ENCODE measurements at regions of chr3 and their contacts with region 1.

Region 1: DNA sequence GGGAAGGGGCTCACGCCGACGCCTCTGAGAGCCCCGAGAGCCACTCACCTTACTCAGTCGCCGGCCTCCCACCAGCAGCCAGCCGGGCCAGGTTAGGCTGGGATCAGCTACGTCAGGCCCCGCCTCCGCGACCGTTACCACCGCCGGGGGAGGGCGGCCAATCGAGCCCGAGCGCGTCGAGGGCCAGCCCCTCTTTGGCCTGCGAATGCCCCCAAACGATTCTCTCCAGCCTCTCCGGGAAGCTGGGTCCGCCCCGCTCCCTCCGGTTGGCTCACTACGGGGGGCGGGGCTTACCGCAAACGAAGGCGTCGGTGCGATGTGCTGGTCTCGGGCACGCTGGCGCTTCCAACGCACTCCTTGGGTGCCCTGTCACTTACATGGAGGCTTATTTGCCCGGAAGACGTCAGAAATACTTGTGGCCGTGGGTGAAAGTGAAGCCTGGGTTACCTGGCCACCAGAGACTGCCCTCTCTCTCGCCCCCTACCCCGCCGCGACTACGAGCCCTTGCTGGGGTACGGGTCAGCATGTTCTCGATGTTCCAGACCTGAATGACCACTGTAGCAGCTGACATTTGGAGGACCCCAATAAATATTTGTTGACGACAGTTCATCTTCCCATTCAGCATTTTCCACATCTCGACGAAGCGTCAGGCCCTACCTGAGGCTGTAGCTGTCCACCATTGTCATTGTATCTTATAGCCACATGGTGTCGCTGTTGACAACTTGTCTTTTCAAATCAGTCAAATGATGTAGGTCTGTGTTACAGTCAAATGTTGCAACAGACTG is at the start of gene CEP70:
- DNase-seq: peak; percentile 96
- H3K4me3 ChIP-seq: peak within 1 kb of the TSS; percentile 65
- H3K27ac ChIP-seq: peak within 1 kb of the TSS; percentile 78
- H3K4me1 ChIP-seq: peaks cover 3% of the 10 kb centered on the region
- H3K27me3 ChIP-seq: no peaks in the 10 kb centered on the region
- CTCF ChIP-seq: peak; percentile 90
- total RNA-seq, gene CEP70: 25.6 and 30.8 TPM in 2 replicates

Region 2: DNA sequence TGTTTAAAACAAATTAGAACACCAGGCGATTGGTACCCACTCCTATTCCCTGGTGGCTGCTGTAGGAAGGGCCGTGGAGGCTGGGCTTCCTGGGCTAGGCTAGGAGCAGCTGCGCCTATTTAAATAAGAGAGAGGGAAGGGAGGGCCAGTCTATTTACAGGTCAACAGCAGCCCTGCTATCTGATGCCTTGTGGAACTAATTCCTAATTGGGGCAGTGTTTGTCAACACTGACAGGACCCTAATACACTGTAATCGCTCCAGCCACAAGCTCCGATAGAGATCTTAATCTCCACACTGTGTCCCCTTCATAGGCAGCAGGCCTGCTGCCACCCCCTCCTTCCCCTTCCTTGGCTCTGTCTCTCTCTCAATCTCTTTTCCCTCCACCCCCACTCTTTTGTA is 947.2 kb before region 1 on chr3:
- CTCF ChIA-PET with region 1: no interaction called
- POLR2A ChIA-PET with region 1: no interaction called
- intact Hi-C with region 1: no loop called
- DNase-seq: no peak
- H3K4me3 ChIP-seq: no peak overlapping the region
- H3K27ac ChIP-seq: no peak overlapping the region
- H3K4me1 ChIP-seq: no peaks in the 10 kb centered on the region
- H3K27me3 ChIP-seq: peaks cover 27% of the 10 kb centered on the region
- CTCF ChIP-seq: no peak

Region 3: GRCh38 chr3:138068579-138069174 is 525.7 kb before region 1 on chr3:
- CTCF ChIA-PET with region 1: no interaction called
- POLR2A ChIA-PET with region 1: no interaction called
- intact Hi-C with region 1: loop called (anchors 5 kb)
- DNase-seq: peak; percentile 85
- H3K4me3 ChIP-seq: no peak overlapping the region
- H3K27ac ChIP-seq: no peak overlapping the region
- H3K4me1 ChIP-seq: no peaks in the 10 kb centered on the region
- H3K27me3 ChIP-seq: no peaks in the 10 kb centered on the region
- CTCF ChIP-seq: peak; percentile 99

Region 4: DNA sequence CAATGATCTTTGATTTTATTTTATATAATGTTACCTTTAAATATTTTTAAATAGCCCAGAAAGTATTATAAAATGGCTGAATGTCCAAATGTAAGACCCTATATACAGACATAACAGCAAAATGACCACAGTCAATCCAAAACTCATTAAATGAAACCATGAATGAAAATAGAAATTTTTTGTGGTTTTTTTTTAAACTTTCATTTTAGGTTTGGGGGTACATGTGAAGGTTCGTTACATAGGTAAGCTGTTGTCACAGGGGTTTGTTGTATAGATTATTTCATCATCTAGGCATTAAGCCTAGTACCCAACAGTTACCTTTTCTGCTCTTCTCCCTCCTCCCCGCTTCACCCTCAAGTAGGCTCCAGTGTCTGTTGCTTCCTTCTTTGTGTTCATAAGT is 123.0 kb after region 1 on chr3:
- CTCF ChIA-PET with region 1: no interaction called
- POLR2A ChIA-PET with region 1: no interaction called
- intact Hi-C with region 1: no loop called
- DNase-seq: no peak
- H3K4me3 ChIP-seq: no peak overlapping the region
- H3K27ac ChIP-seq: no peak overlapping the region
- H3K4me1 ChIP-seq: no peaks in the 10 kb centered on the region
- H3K27me3 ChIP-seq: no peaks in the 10 kb centered on the region
- CTCF ChIP-seq: no peak

Region 5: DNA sequence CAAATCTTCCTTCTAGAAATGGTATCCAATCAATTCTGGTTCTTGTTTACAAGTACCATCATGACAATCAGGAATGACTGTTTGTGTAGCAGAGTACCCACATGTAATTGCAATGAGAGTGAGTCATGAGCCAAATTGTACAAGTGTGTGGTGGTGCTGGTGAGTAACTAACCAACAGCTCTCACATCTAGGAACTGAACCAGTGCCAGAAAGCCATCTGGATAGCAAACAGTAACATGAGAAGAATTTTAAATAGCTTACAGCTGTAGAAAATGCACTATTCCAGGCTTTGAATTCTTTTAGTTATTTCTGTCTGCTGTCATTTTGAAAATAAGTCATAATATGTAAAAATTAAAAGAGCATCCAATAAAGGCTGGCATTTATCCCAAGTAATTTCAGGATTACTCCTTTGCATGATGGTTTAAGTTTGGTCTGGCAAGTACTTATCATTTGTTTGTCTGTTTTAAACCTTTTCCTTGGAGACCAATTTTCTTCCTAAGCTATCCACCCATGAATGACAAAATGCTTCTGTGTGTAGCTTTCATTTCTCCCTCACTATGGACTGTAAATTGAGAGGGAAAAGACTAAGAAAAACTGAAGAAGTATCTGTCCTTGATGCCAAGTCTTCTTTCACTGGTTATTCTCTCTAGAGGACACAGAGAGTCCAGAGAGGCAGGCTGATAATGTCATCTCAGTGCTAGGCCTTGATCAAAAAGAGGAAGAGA is 180.3 kb after region 1 on chr3:
- CTCF ChIA-PET with region 1: no interaction called
- POLR2A ChIA-PET with region 1: no interaction called
- intact Hi-C with region 1: loop called (anchors 5 kb)
- DNase-seq: peak; percentile 94
- H3K4me3 ChIP-seq: no peak overlapping the region
- H3K27ac ChIP-seq: peak overlapping the region; percentile 57
- H3K4me1 ChIP-seq: peaks cover 22% of the 10 kb centered on the region
- H3K27me3 ChIP-seq: no peaks in the 10 kb centered on the region
- CTCF ChIP-seq: 0 out of 2 replicates have a peak, but pooled peaks have one; percentile 29

Region 6: GRCh38 chr3:138923531-138923994 is 329.2 kb after region 1 on chr3:
- CTCF ChIA-PET with region 1: interaction called, 24 read pairs
- POLR2A ChIA-PET with region 1: no interaction called
- intact Hi-C with region 1: no loop called
- DNase-seq: peak; percentile 91
- H3K4me3 ChIP-seq: no peak overlapping the region
- H3K27ac ChIP-seq: no peak overlapping the region
- H3K4me1 ChIP-seq: no peaks in the 10 kb centered on the region
- H3K27me3 ChIP-seq: no peaks in the 10 kb centered on the region
- CTCF ChIP-seq: peak; percentile 92

Region 7: GRCh38 chr3:139329345-139329850 is 735.1 kb after region 1 on chr3:
- CTCF ChIA-PET with region 1: no interaction called
- POLR2A ChIA-PET with region 1: no interaction called
- intact Hi-C with region 1: loop called (anchors 10 kb)
- DNase-seq: peak; percentile 85
- H3K4me3 ChIP-seq: no peak overlapping the region
- H3K27ac ChIP-seq: no peak overlapping the region
- H3K4me1 ChIP-seq: no peaks in the 10 kb centered on the region
- H3K27me3 ChIP-seq: peaks cover 28% of the 10 kb centered on the region
- CTCF ChIP-seq: peak; percentile 99